Caco-2 (cell line): ENCODE measurements at regions of chr3 and their contacts with region 1.

Region 1: DNA sequence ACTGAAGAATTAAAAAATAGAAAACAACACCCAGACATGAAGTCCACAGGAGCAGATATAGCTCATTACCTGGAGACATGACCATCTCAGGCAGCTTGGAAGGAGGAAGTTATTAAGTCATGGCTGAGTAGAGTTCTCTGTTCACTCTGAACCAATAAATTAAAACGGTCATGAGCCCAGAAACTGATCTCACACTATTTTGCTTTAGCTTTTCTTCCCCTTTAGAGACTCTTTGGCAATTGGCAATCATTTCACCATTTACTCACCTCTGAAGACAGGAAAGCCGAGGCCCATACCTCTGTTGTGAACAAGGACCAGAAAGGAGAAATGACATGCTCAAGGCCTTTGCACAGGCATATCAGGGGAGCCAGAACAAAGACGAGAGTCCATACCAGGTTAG is 26.6 kb downstream of the CLDN18 start:
- DNase-seq: no peak
- H3K4me3 ChIP-seq: no peak overlapping the region
- H3K4me3 Mint-ChIP-seq: no peak overlapping the region
- H3K27ac Mint-ChIP-seq: no peak overlapping the region
- H3K4me1 ChIP-seq: no peaks in the 10 kb centered on the region
- H3K4me1 Mint-ChIP-seq: no peaks in the 10 kb centered on the region
- H3K27me3 ChIP-seq: no peaks in the 10 kb centered on the region
- H3K27me3 Mint-ChIP-seq: peaks cover 7% of the 10 kb centered on the region
- CTCF ChIP-seq: no peak

Region 2: GRCh38 chr3:137988152-137988551 is 48.4 kb before region 1 on chr3:
- CTCF ChIA-PET with region 1: no interaction called
- POLR2A ChIA-PET with region 1: no interaction called
- intact Hi-C with region 1: loop called (anchors 5 kb)
- DNase-seq: peak; percentile 35 to 50
- H3K4me3 ChIP-seq: no peak overlapping the region
- H3K4me3 Mint-ChIP-seq: no peak overlapping the region
- H3K27ac Mint-ChIP-seq: peak overlapping the region; percentile 42
- H3K4me1 ChIP-seq: peaks cover 17% of the 10 kb centered on the region
- H3K4me1 Mint-ChIP-seq: peaks cover 14% of the 10 kb centered on the region
- H3K27me3 ChIP-seq: no peaks in the 10 kb centered on the region
- H3K27me3 Mint-ChIP-seq: no peaks in the 10 kb centered on the region
- CTCF ChIP-seq: no peak

Region 3: DNA sequence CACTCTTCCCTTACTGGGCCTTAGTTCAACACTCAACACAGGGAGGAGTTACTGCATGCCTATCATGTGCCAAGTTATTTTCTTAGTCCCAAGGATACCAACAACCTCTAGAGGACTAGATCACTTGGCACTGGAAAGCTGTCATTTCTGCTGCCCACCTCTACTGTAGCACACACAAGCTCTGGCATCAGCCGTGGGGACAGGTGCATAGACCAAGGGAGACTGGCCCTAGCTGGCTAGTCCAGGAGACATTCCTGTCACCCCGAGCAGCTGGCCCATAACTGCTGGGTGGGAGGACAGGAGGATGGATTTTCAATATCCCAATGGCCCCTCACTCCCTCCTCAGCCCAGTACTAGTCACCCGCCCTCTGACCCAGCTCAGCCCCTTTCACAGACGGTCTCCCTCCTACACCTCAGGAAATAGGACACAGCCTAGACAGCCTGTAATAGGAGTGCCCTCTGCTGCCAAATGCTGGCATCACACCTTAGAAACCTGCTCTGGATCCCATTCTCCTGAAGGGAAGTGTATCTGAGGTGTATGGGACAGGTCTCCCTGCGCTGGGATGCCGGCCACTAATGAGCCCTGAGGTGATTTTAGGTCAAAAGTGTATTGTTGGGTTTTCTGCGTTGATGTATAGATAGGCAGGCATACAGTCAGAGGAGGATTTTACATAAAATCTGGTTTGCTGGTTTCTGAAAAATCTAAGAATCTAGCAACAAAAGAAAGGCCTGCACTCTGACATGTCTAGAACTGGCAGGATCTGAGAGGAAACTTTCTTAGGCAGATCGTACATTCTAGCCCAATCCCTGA is 82.2 kb after region 1 on chr3:
- CTCF ChIA-PET with region 1: no interaction called
- POLR2A ChIA-PET with region 1: no interaction called
- intact Hi-C with region 1: no loop called
- DNase-seq: peak; percentile 77 to 82
- H3K4me3 ChIP-seq: no peak overlapping the region
- H3K4me3 Mint-ChIP-seq: no peak overlapping the region
- H3K27ac Mint-ChIP-seq: no peak overlapping the region
- H3K4me1 ChIP-seq: peaks cover 5% of the 10 kb centered on the region
- H3K4me1 Mint-ChIP-seq: no peaks in the 10 kb centered on the region
- H3K27me3 ChIP-seq: no peaks in the 10 kb centered on the region
- H3K27me3 Mint-ChIP-seq: no peaks in the 10 kb centered on the region
- CTCF ChIP-seq: peak; percentile 78 to 85

Region 4: DNA sequence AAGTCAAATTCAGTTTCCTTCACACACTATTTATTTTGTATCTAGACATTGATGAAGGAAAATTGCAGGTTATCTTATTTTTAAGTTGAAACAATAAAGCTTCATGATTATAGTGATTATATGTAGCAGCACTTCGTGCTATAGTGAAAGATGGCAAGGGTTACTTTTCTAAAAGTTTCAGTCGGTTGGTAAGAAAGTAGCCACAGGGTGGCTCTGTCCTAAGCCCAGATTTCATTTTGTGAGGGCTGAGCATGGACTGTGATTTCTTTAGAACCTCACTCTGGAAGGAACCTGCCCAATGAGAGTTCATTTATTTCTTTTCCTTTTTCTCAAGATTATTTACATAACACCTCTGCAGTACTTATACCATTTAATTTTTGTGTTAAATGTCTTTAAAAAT is 226.5 kb after region 1 on chr3:
- CTCF ChIA-PET with region 1: no interaction called
- POLR2A ChIA-PET with region 1: no interaction called
- intact Hi-C with region 1: no loop called
- DNase-seq: no peak
- H3K4me3 ChIP-seq: no peak overlapping the region
- H3K4me3 Mint-ChIP-seq: no peak overlapping the region
- H3K27ac Mint-ChIP-seq: no peak overlapping the region
- H3K4me1 ChIP-seq: peaks cover 15% of the 10 kb centered on the region
- H3K4me1 Mint-ChIP-seq: peaks cover 18% of the 10 kb centered on the region
- H3K27me3 ChIP-seq: no peaks in the 10 kb centered on the region
- H3K27me3 Mint-ChIP-seq: no peaks in the 10 kb centered on the region
- CTCF ChIP-seq: no peak

Region 5: GRCh38 chr3:138389841-138390586 is 353.4 kb after region 1 on chr3:
- CTCF ChIA-PET with region 1: no interaction called
- POLR2A ChIA-PET with region 1: no interaction called
- intact Hi-C with region 1: no loop called
- DNase-seq: peak; percentile 53
- H3K4me3 ChIP-seq: no peak overlapping the region
- H3K4me3 Mint-ChIP-seq: peak overlapping the region; percentile 27
- H3K27ac Mint-ChIP-seq: peak overlapping the region; percentile 59
- H3K4me1 ChIP-seq: peaks cover 14% of the 10 kb centered on the region
- H3K4me1 Mint-ChIP-seq: peaks cover 14% of the 10 kb centered on the region
- H3K27me3 ChIP-seq: no peaks in the 10 kb centered on the region
- H3K27me3 Mint-ChIP-seq: no peaks in the 10 kb centered on the region
- CTCF ChIP-seq: no peak